SK-N-SH (cell line): ENCODE measurements at regions of chr1 and their contacts with region 1.

Region 1: GRCh38 chr1:156583821-156584622 is 4.5 kb downstream of the TTC24 start:
- DNase-seq: peak; percentile 78
- H3K4me3 ChIP-seq: no peak overlapping the region
- H3K27ac ChIP-seq: no peak overlapping the region
- H3K4me1 ChIP-seq: no peaks in the 10 kb centered on the region
- H3K27me3 ChIP-seq: no peaks in the 10 kb centered on the region
- CTCF ChIP-seq: peak; percentile 88
- EP300 ChIP-seq: no peak
- RAD21 ChIP-seq: peak; percentile 89

Region 2: GRCh38 chr1:156524481-156524869 is 59.5 kb before region 1 on chr1:
- CTCF ChIA-PET with region 1: no interaction called
- POLR2A ChIA-PET with region 1: no interaction called
- DNase-seq: no peak
- H3K4me3 ChIP-seq: no peak overlapping the region
- H3K27ac ChIP-seq: no peak overlapping the region
- H3K4me1 ChIP-seq: peaks cover 0 to 12% of the 10 kb centered on the region in 2 experiments; a peak in 1 of 4 replicates
- H3K27me3 ChIP-seq: no peaks in the 10 kb centered on the region
- CTCF ChIP-seq: no peak
- EP300 ChIP-seq: no peak
- RAD21 ChIP-seq: no peak

Region 3: GRCh38 chr1:156601122-156601830 is 17.3 kb after region 1 on chr1 and contains the start of gene GPATCH4:
- CTCF ChIA-PET with region 1: interaction called, 28 read pairs
- POLR2A ChIA-PET with region 1: interaction called, 4 read pairs
- DNase-seq: peak; percentile 77
- H3K4me3 ChIP-seq: peak within 1 kb of the TSS; percentile 72 to 92
- H3K27ac ChIP-seq: peak within 1 kb of the TSS; percentile 85 to 89
- H3K4me1 ChIP-seq: peaks cover 6 to 9% of the 10 kb centered on the region in 2 experiments; a peak in 2 of 4 replicates
- H3K27me3 ChIP-seq: no peaks in the 10 kb centered on the region
- CTCF ChIP-seq: no peak
- EP300 ChIP-seq: no peak
- RAD21 ChIP-seq: no peak
- polyA plus RNA-seq, gene GPATCH4: 36.6 and 46.8 TPM in 2 replicates